ENCODE measurements at regions of chr2 and their contacts with region 1.

Region 1: GRCh38 chr2:174039551-174040416 is 74.6 kb upstream of the SP3 start:
- DNase-seq: peak; percentile 55 to 86 (median 77)
- ATAC-seq: peak; percentile 91
- H3K4me3 ChIP-seq: peak overlapping the region; percentile 41
- H3K4me3 Mint-ChIP-seq: peak overlapping the region; percentile 32 to 81 (median 68)
- H3K27ac ChIP-seq: peak overlapping the region; percentile 82
- H3K27ac Mint-ChIP-seq: peak overlapping the region; percentile 44 to 91 (median 89)
- H3K4me1 ChIP-seq: peaks cover 0 to 5% of the 10 kb centered on the region in 2 donors
- H3K4me1 Mint-ChIP-seq: peaks cover 8 to 20% (median 11%) of the 10 kb centered on the region in 7 donors
- H3K27me3 ChIP-seq: no peaks in the 10 kb centered on the region
- H3K27me3 Mint-ChIP-seq: peaks cover 0 to 12% (median 0%) of the 10 kb centered on the region in 5 donors

Region 2: DNA sequence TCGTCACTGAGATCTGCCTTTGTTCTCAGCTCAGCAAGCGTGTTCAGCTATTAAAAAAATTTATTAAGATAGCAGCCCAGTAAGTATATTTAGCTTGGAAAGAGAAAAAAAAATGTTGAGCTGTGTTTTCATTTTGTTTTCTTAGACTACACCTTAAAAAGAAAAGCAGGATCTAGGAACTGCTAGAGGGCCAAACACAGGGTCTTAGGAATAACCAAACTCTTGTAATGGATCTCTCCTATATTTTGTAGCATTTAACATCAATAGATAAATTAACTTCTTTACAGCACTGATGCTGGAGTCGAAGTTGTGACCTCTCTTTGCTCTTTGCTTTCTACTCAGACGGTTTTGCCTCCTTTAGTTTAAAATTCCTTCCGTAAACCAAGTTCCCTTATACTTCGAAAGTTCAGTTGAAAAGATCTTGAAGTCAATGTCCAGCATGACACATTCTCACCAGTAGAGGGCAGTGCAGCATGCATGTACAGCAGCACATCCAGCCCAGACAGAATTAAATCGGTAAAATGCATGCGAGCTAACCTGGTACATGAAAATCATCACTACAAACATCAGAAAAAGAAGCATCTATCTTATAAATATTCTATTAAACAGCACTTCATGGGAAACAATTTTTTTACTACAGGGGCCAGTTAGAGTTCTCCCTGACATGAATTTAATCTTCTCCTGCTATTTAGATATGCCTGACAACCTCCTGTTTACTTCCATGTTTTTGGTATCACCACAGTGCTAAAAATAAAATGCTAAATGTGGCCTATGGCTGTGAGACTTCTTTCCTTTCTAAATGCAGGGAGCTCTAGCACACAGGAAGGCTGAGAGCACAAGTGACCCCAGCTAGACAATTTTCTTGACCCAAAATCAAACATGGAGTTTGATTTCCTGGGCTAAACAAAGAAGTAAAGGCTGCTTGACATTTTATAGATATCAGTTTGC is 1012.3 kb before region 1 on chr2:
- CTCF ChIA-PET with region 1: no interaction called
- POLR2A ChIA-PET with region 1: no interaction called
- intact Hi-C with region 1: loop called in 1 of 2 experiments (anchors 10 kb)
- DNase-seq: peak; percentile 20 to 75 (median 63)
- ATAC-seq: peak; percentile 91
- H3K4me3 ChIP-seq: no peak overlapping the region
- H3K4me3 Mint-ChIP-seq: no peak overlapping the region
- H3K27ac ChIP-seq: no peak overlapping the region
- H3K27ac Mint-ChIP-seq: no peak overlapping the region
- H3K4me1 ChIP-seq: no peaks in the 10 kb centered on the region
- H3K4me1 Mint-ChIP-seq: peaks cover 0 to 7% (median 3%) of the 10 kb centered on the region in 7 donors
- H3K27me3 ChIP-seq: no peaks in the 10 kb centered on the region
- H3K27me3 Mint-ChIP-seq: peaks cover 6 to 15% (median 9%) of the 10 kb centered on the region in 5 donors

Region 3: GRCh38 chr2:173410579-173410978 is 629.2 kb before region 1 on chr2:
- CTCF ChIA-PET with region 1: no interaction called
- POLR2A ChIA-PET with region 1: no interaction called
- intact Hi-C with region 1: loop called in 1 of 2 experiments (anchors 2 kb)
- DNase-seq: no peak
- ATAC-seq: no peak
- H3K4me3 ChIP-seq: no peak overlapping the region
- H3K4me3 Mint-ChIP-seq: no peak overlapping the region
- H3K27ac ChIP-seq: no peak overlapping the region
- H3K27ac Mint-ChIP-seq: no peak overlapping the region
- H3K4me1 ChIP-seq: no peaks in the 10 kb centered on the region
- H3K4me1 Mint-ChIP-seq: no peaks in the 10 kb centered on the region
- H3K27me3 ChIP-seq: no peaks in the 10 kb centered on the region
- H3K27me3 Mint-ChIP-seq: peaks cover 10 to 38% (median 23%) of the 10 kb centered on the region in 5 donors

Region 4: DNA sequence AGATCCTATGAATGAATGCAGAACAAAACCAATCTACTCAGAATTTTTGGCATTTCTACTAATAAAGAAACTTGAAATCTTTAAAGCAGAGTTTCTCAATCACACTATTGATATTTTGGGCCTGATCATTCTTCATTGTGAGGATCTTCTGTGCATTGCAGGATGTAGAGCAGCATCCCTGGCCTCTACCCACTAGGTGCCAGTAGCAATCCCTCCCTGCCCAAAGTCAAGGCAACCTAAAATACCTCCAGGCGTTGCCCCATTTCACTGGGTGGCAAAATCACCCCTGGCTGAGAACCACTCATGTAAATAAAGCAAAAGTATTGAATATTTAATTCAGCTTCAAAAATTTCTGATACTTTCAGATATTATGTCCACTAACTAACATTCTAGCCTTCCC is 287.6 kb before region 1 on chr2:
- CTCF ChIA-PET with region 1: no interaction called
- POLR2A ChIA-PET with region 1: no interaction called
- intact Hi-C with region 1: loop called in 1 of 2 experiments (anchors 1 kb)
- DNase-seq: peak in 2 of 9 donors; percentile 4 to 8
- ATAC-seq: no peak
- H3K4me3 ChIP-seq: no peak overlapping the region
- H3K4me3 Mint-ChIP-seq: no peak overlapping the region
- H3K27ac ChIP-seq: no peak overlapping the region
- H3K27ac Mint-ChIP-seq: no peak overlapping the region
- H3K4me1 ChIP-seq: no peaks in the 10 kb centered on the region
- H3K4me1 Mint-ChIP-seq: no peaks in the 10 kb centered on the region
- H3K27me3 ChIP-seq: no peaks in the 10 kb centered on the region
- H3K27me3 Mint-ChIP-seq: peaks cover 0 to 13% (median 0%) of the 10 kb centered on the region in 5 donors

Region 5: DNA sequence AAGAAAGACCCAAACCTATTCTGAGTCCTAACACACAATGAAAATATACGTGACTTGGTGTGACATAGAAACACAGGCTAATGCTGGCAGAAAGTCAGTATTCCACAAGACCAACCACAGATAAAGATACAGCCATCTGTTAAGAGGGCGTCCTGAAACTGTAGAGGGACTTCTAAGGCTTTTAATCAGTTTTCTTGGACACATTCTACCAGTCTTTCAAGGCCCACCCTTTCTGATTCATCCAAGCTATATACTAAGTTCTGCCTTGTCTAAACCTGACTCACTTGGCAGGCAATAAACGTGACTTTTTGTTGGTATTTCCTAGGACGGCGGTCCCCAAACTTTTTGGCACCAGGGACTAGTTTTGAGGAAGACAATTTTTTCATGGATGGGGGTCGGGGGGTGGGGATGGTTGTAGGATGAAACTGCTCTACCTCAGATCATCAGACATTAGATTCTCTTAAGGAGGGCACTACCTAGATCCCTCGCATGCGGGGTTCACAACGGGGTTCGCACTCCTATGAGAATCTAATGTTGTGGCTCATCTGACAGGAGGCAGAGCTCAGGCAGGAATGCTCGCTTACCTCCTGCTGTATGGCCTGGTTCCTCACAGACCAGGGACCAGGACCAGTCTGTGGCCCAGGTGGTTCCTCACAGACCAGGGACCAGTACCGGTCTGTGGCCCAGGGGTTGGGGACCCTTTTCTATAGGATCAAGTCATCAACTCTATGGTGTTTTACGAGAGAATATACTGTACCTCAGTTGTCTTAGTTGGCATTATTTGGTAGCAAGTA is 136.0 kb before region 1 on chr2:
- CTCF ChIA-PET with region 1: no interaction called
- POLR2A ChIA-PET with region 1: no interaction called
- intact Hi-C with region 1: loop called (anchors 5 kb)
- DNase-seq: no peak
- ATAC-seq: no peak
- H3K4me3 ChIP-seq: no peak overlapping the region
- H3K4me3 Mint-ChIP-seq: no peak overlapping the region
- H3K27ac ChIP-seq: no peak overlapping the region
- H3K27ac Mint-ChIP-seq: peak overlapping the region in 1 of 9 donors; percentile 70
- H3K4me1 ChIP-seq: no peaks in the 10 kb centered on the region
- H3K4me1 Mint-ChIP-seq: peaks cover 0 to 11% (median 3%) of the 10 kb centered on the region in 7 donors
- H3K27me3 ChIP-seq: no peaks in the 10 kb centered on the region
- H3K27me3 Mint-ChIP-seq: no peaks in the 10 kb centered on the region

Region 6: DNA sequence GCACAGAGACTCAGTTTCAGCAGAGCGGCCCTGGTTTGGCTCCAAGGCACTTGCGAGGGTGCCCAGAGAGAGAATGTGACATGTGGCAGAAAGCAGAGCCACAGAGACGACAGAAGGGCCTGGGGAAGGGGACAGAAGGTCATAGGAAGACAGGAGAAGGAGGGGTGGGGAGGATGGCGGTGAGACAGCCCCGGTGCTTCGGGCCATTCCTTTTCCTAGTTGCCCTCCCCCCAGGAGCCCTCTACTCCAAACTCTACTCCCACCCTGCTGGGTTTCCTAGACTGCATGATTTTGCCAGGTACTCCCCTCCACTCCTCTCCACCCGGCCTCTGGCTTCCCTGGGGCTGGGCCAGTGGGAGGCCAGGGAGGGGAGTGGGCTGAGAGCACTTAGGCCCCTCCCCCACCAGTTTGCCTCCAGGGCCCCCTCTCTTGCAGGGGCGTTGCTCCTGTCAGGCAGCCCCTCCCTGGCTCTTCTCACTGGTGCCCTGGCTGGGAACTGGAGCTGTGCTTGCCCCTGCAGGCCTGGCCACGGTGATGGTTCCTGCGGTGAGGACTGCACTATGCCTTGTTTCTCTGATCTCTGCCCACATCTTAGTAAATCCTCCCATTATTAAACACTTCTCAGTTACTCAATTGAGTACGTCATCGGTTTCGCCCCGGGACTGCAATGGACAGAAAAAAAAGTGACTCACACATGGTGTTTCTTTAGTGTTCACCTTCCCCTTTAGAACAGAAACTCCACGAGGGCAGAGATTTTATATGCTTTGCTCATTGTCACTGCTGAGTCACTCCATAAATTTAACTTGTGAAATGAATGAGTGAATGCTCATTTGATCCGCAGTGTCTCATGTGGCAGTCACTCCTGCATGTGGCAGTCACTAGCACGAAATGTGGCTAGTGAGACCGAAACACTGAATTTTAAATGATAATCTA is 15.9 kb before region 1 on chr2:
- CTCF ChIA-PET with region 1: interaction called, 3 read pairs
- POLR2A ChIA-PET with region 1: no interaction called
- intact Hi-C with region 1: loop called in 1 of 2 experiments (anchors 2 kb)
- DNase-seq: no peak
- ATAC-seq: peak; percentile 84
- H3K4me3 ChIP-seq: no peak overlapping the region
- H3K4me3 Mint-ChIP-seq: no peak overlapping the region
- H3K27ac ChIP-seq: no peak overlapping the region
- H3K27ac Mint-ChIP-seq: no peak overlapping the region
- H3K4me1 ChIP-seq: no peaks in the 10 kb centered on the region
- H3K4me1 Mint-ChIP-seq: peaks cover 0 to 8% (median 0%) of the 10 kb centered on the region in 7 donors
- H3K27me3 ChIP-seq: no peaks in the 10 kb centered on the region
- H3K27me3 Mint-ChIP-seq: peaks cover 0 to 3% (median 0%) of the 10 kb centered on the region in 5 donors